B cell (primary cell): ENCODE measurements at regions of chr18 and their contacts with region 1.

Region 1: DNA sequence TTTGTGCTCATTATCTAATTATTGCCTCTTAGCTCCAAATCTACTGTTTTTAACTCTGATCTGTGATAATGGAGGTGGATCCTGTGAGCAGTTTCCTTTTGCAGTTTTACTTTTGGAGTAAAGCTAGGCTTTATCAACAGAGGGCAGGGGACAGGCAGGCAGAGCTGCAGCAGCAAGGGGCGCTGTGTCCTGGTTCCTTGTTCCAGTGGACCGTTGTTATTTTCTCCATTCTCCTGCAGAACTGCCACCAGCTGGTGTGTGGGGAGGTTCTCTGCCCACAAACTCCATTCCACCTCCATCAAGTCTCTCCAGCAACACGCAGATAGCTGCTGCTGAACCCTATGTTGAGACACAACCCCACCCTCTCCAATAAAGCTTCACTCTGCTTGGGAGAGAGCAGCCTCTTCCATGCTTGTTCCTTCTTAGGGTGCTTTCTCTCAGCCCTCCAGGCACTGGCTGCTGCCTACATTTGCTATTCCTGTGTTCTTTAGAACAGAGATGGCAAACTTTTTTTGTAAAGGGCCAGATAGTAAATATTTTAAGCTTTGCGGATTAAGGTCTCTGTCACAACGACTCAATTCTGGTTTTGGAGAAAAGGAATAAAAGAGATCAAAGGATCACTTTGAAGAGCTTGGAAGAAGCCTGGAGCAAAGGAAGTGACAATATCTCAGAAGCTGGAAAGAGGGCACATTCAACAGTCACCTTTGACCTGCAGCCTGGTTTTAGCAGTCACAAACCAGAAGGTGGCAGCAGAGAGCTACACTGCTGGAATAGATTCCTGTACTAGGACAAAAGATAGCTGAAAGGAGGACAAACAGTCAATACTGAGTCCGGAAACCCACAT is 208.8 kb downstream of the CCDC178 start:
- DNase-seq: peak; percentile 51
- ATAC-seq: no peak
- H3K4me3 ChIP-seq: no peak overlapping the region
- H3K4me3 Mint-ChIP-seq: no peak overlapping the region
- H3K27ac ChIP-seq: no peak overlapping the region
- H3K27ac Mint-ChIP-seq: no peak overlapping the region
- H3K4me1 ChIP-seq: no peaks in the 10 kb centered on the region
- H3K4me1 Mint-ChIP-seq: no peaks in the 10 kb centered on the region
- H3K27me3 ChIP-seq: no peaks in the 10 kb centered on the region
- H3K27me3 Mint-ChIP-seq: no peaks in the 10 kb centered on the region
- CTCF ChIP-seq: peak; percentile 90

Region 2: DNA sequence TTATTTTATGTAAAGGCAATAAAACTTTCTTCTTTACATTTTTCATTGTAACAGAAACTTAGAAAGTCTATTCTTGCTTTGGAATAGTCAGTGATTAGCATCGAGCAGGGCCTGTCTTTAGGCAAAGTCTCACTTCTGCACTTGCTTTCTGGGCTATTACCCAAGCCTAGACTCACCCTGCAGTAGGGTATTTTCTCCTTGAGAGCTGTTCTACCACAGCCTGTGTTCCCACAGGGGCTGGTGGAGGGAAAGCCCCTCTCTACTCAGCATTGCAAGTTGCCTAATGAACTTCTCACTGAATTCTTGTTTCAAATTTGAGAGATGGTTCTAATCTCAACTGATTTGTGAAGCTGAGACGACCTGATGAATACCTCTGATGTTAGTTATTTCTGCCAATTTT is 347.2 kb before region 1 on chr18:
- CTCF ChIA-PET with region 1: no interaction called
- POLR2A ChIA-PET with region 1: no interaction called
- intact Hi-C with region 1: no loop called
- DNase-seq: peak; percentile 87
- ATAC-seq: peak; percentile 99
- H3K4me3 ChIP-seq: no peak overlapping the region
- H3K4me3 Mint-ChIP-seq: peak overlapping the region; percentile 71
- H3K27ac ChIP-seq: peak overlapping the region; percentile 78 to 79
- H3K27ac Mint-ChIP-seq: peak overlapping the region; percentile 88
- H3K4me1 ChIP-seq: peaks cover 68 to 70% of the 10 kb centered on the region in 2 donors
- H3K4me1 Mint-ChIP-seq: peaks cover 76% of the 10 kb centered on the region
- H3K27me3 ChIP-seq: no peaks in the 10 kb centered on the region
- H3K27me3 Mint-ChIP-seq: no peaks in the 10 kb centered on the region
- CTCF ChIP-seq: no peak

Region 3: GRCh38 chr18:33212363-33212762 is 19.3 kb before region 1 on chr18:
- CTCF ChIA-PET with region 1: interaction called, 15 read pairs
- POLR2A ChIA-PET with region 1: no interaction called
- intact Hi-C with region 1: no loop called
- DNase-seq: no peak
- ATAC-seq: no peak
- H3K4me3 ChIP-seq: no peak overlapping the region
- H3K4me3 Mint-ChIP-seq: no peak overlapping the region
- H3K27ac ChIP-seq: no peak overlapping the region
- H3K27ac Mint-ChIP-seq: no peak overlapping the region
- H3K4me1 ChIP-seq: no peaks in the 10 kb centered on the region
- H3K4me1 Mint-ChIP-seq: no peaks in the 10 kb centered on the region
- H3K27me3 ChIP-seq: no peaks in the 10 kb centered on the region
- H3K27me3 Mint-ChIP-seq: peaks cover 3% of the 10 kb centered on the region
- CTCF ChIP-seq: no peak

Region 4: GRCh38 chr18:34787931-34788532 is 1556.3 kb after region 1 on chr18:
- CTCF ChIA-PET with region 1: interaction called, 7 read pairs
- POLR2A ChIA-PET with region 1: no interaction called
- intact Hi-C with region 1: loop called (anchors 5 kb)
- DNase-seq: peak; percentile 58
- ATAC-seq: peak; percentile 47
- H3K4me3 ChIP-seq: no peak overlapping the region
- H3K4me3 Mint-ChIP-seq: no peak overlapping the region
- H3K27ac ChIP-seq: no peak overlapping the region
- H3K27ac Mint-ChIP-seq: no peak overlapping the region
- H3K4me1 ChIP-seq: no peaks in the 10 kb centered on the region
- H3K4me1 Mint-ChIP-seq: no peaks in the 10 kb centered on the region
- H3K27me3 ChIP-seq: no peaks in the 10 kb centered on the region
- H3K27me3 Mint-ChIP-seq: peaks cover 9% of the 10 kb centered on the region
- CTCF ChIP-seq: peak; percentile 92